AG04449 (cell line): ENCODE measurements at regions of chr1 and their contacts with region 1.

Region 1: DNA sequence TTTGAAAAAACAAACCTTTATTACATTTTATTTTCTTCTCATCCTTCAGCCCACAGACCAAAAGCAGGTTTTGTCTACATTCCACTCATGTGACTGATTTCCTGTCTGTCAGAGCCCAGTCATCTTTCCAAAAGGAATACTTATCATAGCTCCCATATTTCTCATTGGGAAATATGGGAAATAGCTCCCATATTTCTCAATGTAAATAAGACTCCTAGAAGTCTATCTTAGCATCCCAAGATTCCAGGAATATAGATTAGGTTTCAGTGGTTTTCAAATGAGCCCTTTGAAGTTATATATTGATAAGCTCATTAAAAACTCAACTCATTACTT is 19.1 kb upstream of the NRDC start:
- DNase-seq: peak; percentile 90
- H3K4me3 ChIP-seq: no peak overlapping the region
- CTCF ChIP-seq: no peak

Region 2: DNA sequence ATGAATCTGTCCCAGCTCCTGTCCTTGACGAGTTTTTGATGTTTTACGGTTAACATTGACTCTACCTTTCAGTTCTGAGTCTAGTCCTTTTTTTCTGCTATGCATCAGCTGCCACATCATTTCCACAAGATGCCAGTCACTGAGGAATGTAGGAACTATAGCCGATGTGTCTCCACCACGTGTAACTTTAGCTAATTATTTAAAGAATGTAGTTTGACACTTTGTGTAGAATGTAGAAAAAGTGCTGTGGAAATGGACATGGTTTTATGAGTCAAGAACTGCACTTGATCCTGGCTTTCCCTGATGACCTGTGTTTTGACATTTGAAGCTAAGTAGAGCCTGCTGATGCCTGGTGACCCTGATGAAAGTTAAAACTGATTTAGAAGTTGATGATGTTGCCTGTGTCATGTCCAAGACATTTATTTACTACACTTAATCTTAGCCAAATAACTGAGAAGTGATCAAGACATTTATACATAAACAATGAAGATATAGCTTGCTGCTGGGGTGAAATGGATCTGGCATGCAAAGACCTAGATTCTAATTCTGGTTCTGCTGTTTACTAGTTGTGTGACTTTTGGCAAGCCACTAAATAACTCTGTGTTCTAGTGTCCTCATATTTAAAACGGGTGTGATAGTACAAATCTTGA is 285.2 kb before region 1 on chr1:
- CTCF ChIA-PET with region 1: no interaction called
- POLR2A ChIA-PET with region 1: no interaction called
- DNase-seq: no peak
- H3K4me3 ChIP-seq: no peak overlapping the region
- CTCF ChIP-seq: no peak

Region 3: GRCh38 chr1:51850420-51851223 is 47.0 kb before region 1 on chr1:
- CTCF ChIA-PET with region 1: no interaction called
- POLR2A ChIA-PET with region 1: no interaction called
- DNase-seq: no peak
- H3K4me3 ChIP-seq: no peak overlapping the region
- CTCF ChIP-seq: no peak

Region 4: GRCh38 chr1:51878616-51879336 is 18.9 kb before region 1 on chr1 and contains the start of gene NRDC:
- CTCF ChIA-PET with region 1: interaction called, 31 read pairs
- POLR2A ChIA-PET with region 1: interaction called, 7 read pairs
- DNase-seq: peak; percentile 99
- H3K4me3 ChIP-seq: peak within 1 kb of the TSS; percentile 75
- CTCF ChIP-seq: no peak

Region 5: GRCh38 chr1:51926171-51926812 is 28.6 kb after region 1 on chr1:
- CTCF ChIA-PET with region 1: interaction called, 80 read pairs
- POLR2A ChIA-PET with region 1: interaction called, 25 read pairs
- DNase-seq: no peak
- H3K4me3 ChIP-seq: no peak overlapping the region
- CTCF ChIP-seq: peak; percentile 52

Region 6: DNA sequence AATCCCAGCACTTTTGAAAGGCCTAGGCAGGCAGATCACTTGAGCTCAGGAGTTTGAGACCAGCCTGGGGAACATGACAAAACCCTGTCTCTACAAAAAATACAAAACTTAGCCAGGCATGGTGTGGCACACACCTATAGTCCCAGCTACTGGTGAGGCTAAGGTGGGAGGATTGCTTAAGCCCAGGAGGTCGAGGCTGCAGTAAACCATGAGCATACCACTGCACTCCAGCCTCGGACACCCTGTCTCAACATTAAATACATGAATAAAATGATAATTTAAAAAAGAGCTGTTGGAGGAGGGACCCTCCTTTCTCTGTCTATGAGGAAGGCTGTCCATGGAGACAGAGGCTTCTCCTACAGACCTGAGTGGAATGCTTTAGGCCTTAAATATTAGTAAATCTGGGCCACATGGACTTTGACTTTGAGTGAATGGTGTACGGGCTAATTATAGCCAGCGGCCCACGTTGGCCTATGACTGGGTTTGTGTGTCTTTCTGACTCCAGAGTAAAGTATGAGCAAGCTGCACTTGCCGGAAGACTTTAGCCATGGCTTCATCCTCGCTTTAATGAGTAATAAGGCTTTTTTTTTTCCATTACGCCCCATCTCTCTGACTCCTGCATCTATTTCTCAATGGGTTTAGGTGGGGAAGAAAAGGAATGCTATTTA is 71.5 kb after region 1 on chr1:
- CTCF ChIA-PET with region 1: interaction called, 13 read pairs
- POLR2A ChIA-PET with region 1: interaction called, 5 read pairs
- DNase-seq: peak; percentile 80
- H3K4me3 ChIP-seq: no peak overlapping the region
- CTCF ChIP-seq: no peak

Region 7: GRCh38 chr1:52002038-52002917 is 104.6 kb after region 1 on chr1:
- CTCF ChIA-PET with region 1: interaction called, 63 read pairs
- POLR2A ChIA-PET with region 1: interaction called, 21 read pairs
- DNase-seq: peak; percentile 70
- H3K4me3 ChIP-seq: no peak overlapping the region
- CTCF ChIP-seq: peak; percentile 83